ENCODE measurements at regions of chr12 and their contacts with region 1.

Region 1: GRCh38 chr12:4118017-4118510 is 155.5 kb upstream of the CCND2 start:
- DNase-seq: no peak
- H3K4me3 Mint-ChIP-seq: peak overlapping the region; percentile 58
- H3K27ac Mint-ChIP-seq: peak overlapping the region; percentile 96
- H3K4me1 Mint-ChIP-seq: peaks cover 61% of the 10 kb centered on the region
- H3K27me3 Mint-ChIP-seq: no peaks in the 10 kb centered on the region

Region 2: GRCh38 chr12:4064008-4064407 is 54.1 kb before region 1 on chr12:
- CTCF ChIA-PET with region 1: no interaction called
- intact Hi-C with region 1: loop called (anchors 2 kb)
- DNase-seq: no peak
- H3K4me3 Mint-ChIP-seq: no peak overlapping the region
- H3K27ac Mint-ChIP-seq: peak overlapping the region; percentile 58
- H3K4me1 Mint-ChIP-seq: peaks cover 30% of the 10 kb centered on the region
- H3K27me3 Mint-ChIP-seq: no peaks in the 10 kb centered on the region

Region 3: DNA sequence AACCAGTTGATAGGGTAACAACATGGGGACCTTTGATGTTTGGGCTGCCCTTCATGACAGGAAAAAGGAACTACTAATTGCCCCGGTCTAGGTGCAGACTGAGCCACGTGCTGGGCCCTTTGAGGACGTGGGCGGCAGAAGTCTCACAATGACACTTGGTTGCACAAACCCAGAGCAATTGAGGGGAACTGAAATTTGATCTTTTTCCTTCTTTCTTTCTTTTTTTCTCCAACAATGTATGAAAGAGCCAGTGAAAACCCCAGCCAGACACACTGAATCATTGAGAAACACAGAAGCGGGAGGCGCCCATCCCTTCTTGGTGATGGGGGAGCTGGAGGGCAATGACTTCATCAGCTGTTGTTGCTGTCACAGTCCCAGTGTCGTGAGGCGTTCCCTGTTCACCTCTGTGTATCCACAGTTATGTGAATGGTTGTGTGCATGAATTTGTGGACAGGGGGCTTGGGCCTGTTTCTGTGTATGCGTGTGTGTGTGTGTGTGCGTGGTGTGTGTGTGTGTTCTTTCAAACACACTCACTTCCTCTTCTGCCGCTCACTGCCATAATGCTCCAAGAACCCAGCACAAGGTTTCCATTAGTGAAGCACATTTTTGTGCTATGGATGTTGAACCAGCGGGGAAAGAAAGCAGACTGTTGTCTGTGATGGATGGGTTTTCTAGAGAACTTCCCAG is 18.0 kb after region 1 on chr12:
- CTCF ChIA-PET with region 1: interaction called, 12 read pairs
- intact Hi-C with region 1: loop called (anchors 1 kb)
- DNase-seq: peak; percentile 95
- H3K4me3 Mint-ChIP-seq: peak overlapping the region; percentile 41
- H3K27ac Mint-ChIP-seq: peak overlapping the region; percentile 99
- H3K4me1 Mint-ChIP-seq: peaks cover 75% of the 10 kb centered on the region
- H3K27me3 Mint-ChIP-seq: no peaks in the 10 kb centered on the region

Region 4: DNA sequence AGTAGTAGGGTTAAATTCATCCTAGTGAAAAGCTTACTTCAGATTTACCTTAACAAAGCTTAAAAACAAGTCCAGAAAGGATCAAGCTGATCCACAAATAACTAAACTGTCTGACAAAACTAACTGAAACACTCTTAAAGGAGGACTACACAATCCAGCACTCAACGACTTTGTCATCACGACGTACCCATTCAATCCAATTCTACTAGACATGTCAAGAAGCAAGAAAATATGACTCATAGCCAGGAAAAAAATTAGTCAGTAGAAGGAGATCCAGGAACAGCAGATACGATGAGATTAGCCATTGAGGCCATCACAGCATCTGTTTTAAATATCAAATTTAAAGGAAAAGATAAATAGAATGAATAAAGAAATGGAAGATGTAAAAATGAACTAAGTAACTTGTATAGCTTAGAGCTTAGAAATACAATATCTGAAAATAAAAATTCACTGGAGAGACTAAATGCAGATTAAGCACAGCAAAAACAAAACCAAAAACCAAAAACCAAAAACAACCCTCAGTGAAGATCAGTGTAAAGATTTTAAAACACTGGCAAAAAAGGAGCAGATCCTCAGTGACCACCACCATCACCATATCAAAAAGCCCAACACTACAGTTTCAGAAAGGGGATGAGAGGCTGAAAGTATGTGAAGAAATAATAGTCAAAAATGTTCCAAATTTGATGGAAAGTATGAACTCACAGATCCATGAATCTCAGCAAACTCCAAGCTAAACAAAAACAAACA is 60.5 kb after region 1 on chr12:
- CTCF ChIA-PET with region 1: interaction called, 6 read pairs
- intact Hi-C with region 1: loop called (anchors 1 kb)
- DNase-seq: peak; percentile 64
- H3K4me3 Mint-ChIP-seq: peak overlapping the region; percentile 14
- H3K27ac Mint-ChIP-seq: peak overlapping the region; percentile 87
- H3K4me1 Mint-ChIP-seq: peaks cover 21% of the 10 kb centered on the region
- H3K27me3 Mint-ChIP-seq: no peaks in the 10 kb centered on the region

Region 5: GRCh38 chr12:4506870-4507269 is 388.8 kb after region 1 on chr12:
- CTCF ChIA-PET with region 1: no interaction called
- intact Hi-C with region 1: loop called (anchors 5 kb)
- DNase-seq: peak; percentile 32
- H3K4me3 Mint-ChIP-seq: peak overlapping the region; percentile 1
- H3K27ac Mint-ChIP-seq: peak overlapping the region; percentile 63
- H3K4me1 Mint-ChIP-seq: peaks cover 26% of the 10 kb centered on the region
- H3K27me3 Mint-ChIP-seq: no peaks in the 10 kb centered on the region

Region 6: GRCh38 chr12:5643266-5643665 is 1525.2 kb after region 1 on chr12:
- CTCF ChIA-PET with region 1: no interaction called
- intact Hi-C with region 1: no loop called
- DNase-seq: no peak
- H3K4me3 Mint-ChIP-seq: no peak overlapping the region
- H3K27ac Mint-ChIP-seq: no peak overlapping the region
- H3K4me1 Mint-ChIP-seq: no peaks in the 10 kb centered on the region
- H3K27me3 Mint-ChIP-seq: peaks cover 7% of the 10 kb centered on the region

Measured in activated naive CD4-positive, alpha-beta T cell treated with anti-CD3 and anti-CD28 coated beads for 36 hours (primary cell).